Heart right ventricle (tissue), 16 donors: ENCODE measurements at regions of chr6 and their contacts with region 1.

Region 1: DNA sequence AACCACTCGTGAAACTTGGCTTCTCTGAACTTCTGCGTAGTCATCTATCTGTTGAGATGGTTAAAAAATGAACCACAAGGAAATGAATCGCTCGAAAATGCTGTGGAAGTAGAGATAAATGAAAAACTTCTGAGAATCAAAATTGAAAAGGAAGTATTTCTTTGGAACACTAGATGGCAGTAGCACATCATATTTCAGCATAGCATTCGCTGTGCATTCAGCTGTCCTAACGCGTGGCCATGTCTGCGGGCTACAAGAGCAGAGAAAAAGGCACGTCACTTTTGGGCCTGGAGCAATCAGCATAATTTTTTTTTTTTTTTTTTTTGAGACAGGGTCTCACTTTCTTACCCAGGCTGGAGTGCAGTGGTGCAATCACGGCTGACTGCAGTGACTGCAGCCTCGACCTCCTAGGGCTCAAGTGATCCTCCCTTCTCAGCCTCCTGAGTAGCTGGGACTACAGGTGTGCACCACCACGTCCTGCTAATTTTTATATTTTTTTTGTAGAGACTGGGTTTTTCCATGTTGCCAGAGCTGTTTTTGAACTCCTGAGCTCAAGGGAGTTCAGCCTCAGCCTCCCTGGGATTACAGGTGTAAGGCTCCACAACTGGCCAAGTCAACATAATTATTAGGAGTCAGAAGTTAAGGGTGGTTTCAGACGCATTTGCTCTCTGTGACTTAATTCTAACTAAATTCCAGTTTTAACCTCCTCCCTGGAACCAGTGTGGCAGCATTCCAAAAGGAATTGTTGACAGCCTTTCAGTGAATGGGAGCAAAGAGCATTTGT is 8.8 kb upstream of the PERP start:
- DNase-seq: peak; percentile 34 to 45
- ATAC-seq: peak; percentile 69 to 88 (median 82)
- H3K4me3 ChIP-seq: no peak overlapping the region
- H3K27ac ChIP-seq: no peak overlapping the region
- H3K4me1 ChIP-seq: peaks cover 0 to 7% (median 0%) of the 10 kb centered on the region in 9 donors
- H3K27me3 ChIP-seq: peaks cover 0 to 10% (median 5%) of the 10 kb centered on the region in 7 donors
- CTCF ChIP-seq: peak; percentile 63 to 84 (median 74)

Region 2: GRCh38 chr6:137661601-137662000 is 454.5 kb before region 1 on chr6:
- intact Hi-C with region 1: no loop called
- DNase-seq: peak; percentile 16 to 19
- ATAC-seq: peak in 1 of 8 donors; percentile 58
- H3K4me3 ChIP-seq: no peak overlapping the region
- H3K27ac ChIP-seq: no peak overlapping the region
- H3K4me1 ChIP-seq: peaks cover 0 to 7% (median 0%) of the 10 kb centered on the region in 9 donors
- H3K27me3 ChIP-seq: no peaks in the 10 kb centered on the region
- CTCF ChIP-seq: peak; percentile 19 to 61 (median 48)

Region 3: DNA sequence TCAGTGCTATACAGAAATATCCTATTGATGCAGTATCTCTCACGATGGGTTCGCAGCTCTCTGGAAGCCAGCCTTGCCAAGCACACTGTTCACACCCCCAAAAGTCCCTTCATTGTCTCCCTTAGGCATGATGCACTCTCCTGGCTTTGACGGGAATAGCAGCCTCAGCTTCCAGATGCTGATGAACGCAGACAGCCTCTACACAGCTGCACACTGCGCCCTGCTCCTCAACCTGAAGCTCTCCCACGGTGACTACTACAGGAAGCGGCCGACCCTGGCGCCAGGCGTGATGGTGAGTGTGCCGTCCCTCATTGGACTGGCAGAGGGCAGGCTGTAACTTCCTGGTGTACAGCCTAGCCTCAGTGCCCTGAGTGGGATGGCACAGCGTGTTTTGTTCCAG is 162.3 kb after region 1 on chr6:
- intact Hi-C with region 1: loop called in 8 of 10 experiments (anchors 5 kb)
- DNase-seq: peak in 1 of 2 donors; percentile 18
- ATAC-seq: peak; percentile 50 to 78 (median 72)
- H3K4me3 ChIP-seq: no peak overlapping the region
- H3K27ac ChIP-seq: no peak overlapping the region
- H3K4me1 ChIP-seq: no peaks in the 10 kb centered on the region
- H3K27me3 ChIP-seq: no peaks in the 10 kb centered on the region
- CTCF ChIP-seq: peak in 8 of 9 donors; percentile 31 to 58 (median 46)

Region 4: GRCh38 chr6:138346302-138347195 is 230.5 kb after region 1 on chr6:
- intact Hi-C with region 1: no loop called
- DNase-seq: no peak
- ATAC-seq: no peak
- H3K4me3 ChIP-seq: no peak overlapping the region
- H3K27ac ChIP-seq: no peak overlapping the region
- H3K4me1 ChIP-seq: peaks cover 0 to 10% (median 0%) of the 10 kb centered on the region in 9 donors
- H3K27me3 ChIP-seq: no peaks in the 10 kb centered on the region
- CTCF ChIP-seq: no peak

Region 5: GRCh38 chr6:138403801-138404661 is 288.0 kb after region 1 on chr6 and contains the start of gene HEBP2:
- intact Hi-C with region 1: loop called in 8 of 10 experiments (anchors 5 to 10 kb)
- DNase-seq: peak; percentile 95
- ATAC-seq: peak; percentile 92 to 95 (median 94)
- H3K4me3 ChIP-seq: peak within 1 kb of the TSS; percentile 43 to 92 (median 78)
- H3K27ac ChIP-seq: peak within 1 kb of the TSS; percentile 86 to 98 (median 95)
- H3K4me1 ChIP-seq: peaks cover 0 to 28% (median 20%) of the 10 kb centered on the region in 9 donors
- H3K27me3 ChIP-seq: no peaks in the 10 kb centered on the region
- CTCF ChIP-seq: peak; percentile 51 to 82 (median 68)
- total RNA-seq, gene HEBP2: 88.4 to 108 (median 100) TPM

Region 6: GRCh38 chr6:138517635-138518034 is 401.6 kb after region 1 on chr6:
- intact Hi-C with region 1: loop called in 8 of 10 experiments (anchors 5 to 10 kb)
- DNase-seq: peak in 1 of 2 donors; percentile 22
- ATAC-seq: peak in 2 of 8 donors; percentile 37 to 47
- H3K4me3 ChIP-seq: no peak overlapping the region
- H3K27ac ChIP-seq: no peak overlapping the region
- H3K4me1 ChIP-seq: peaks cover 0 to 67% (median 13%) of the 10 kb centered on the region in 9 donors
- H3K27me3 ChIP-seq: no peaks in the 10 kb centered on the region
- CTCF ChIP-seq: peak; percentile 12 to 66 (median 53)

Region 7: DNA sequence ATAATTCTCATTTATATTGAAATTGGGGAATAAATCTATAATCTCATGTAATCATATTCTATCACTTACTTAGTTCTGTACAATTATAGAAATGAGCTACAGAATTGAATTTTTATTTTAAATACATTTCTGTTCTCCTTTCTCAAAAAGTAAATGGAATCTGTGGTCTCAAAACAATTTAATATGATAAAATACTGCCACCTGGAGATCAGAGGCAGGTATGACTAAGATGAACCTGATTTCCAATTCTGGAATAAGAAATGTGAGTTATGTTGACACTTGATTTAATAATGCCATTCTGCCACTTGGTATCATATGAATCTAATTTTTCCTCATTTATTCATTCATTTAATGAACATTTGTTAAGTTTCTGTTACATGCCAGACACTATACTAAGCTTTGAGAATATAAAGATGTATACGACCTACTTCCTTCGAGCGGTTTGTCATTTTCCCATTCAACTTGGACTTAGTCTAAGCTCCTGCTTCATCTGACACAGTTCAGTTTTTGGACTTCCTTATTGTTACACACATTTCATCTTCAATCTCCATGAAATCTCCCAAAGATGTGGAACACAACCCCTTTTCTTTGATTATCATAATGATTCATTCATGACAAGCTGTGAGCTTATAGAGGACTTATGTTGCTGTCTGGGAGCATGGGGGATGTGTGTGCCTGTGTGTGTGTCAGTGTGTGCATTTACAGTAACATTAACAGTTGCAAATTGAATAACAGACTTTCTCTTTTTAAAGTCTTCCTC is 650.0 kb after region 1 on chr6:
- intact Hi-C with region 1: loop called (anchors 2 to 10 kb)
- DNase-seq: no peak
- ATAC-seq: no peak
- H3K4me3 ChIP-seq: no peak overlapping the region
- H3K27ac ChIP-seq: no peak overlapping the region
- H3K4me1 ChIP-seq: no peaks in the 10 kb centered on the region
- H3K27me3 ChIP-seq: no peaks in the 10 kb centered on the region
- CTCF ChIP-seq: peak; percentile 34 to 86 (median 70)